ENCODE measurements at regions of chr6 and their contacts with region 1.

Region 1: GRCh38 chr6:80106418-80107235 is at the start of gene BCKDHB:
- DNase-seq: peak; percentile 94 to 99 (median 96)
- ATAC-seq: peak; percentile 97
- H3K4me3 ChIP-seq: peak within 1 kb of the TSS; percentile 80
- H3K4me3 Mint-ChIP-seq: peak within 1 kb of the TSS; percentile 93
- H3K27ac ChIP-seq: peak within 1 kb of the TSS; percentile 23 to 30
- H3K27ac Mint-ChIP-seq: peak within 1 kb of the TSS; percentile 80
- H3K4me1 ChIP-seq: peaks cover 9% of the 10 kb centered on the region
- H3K4me1 Mint-ChIP-seq: peaks cover 36% of the 10 kb centered on the region
- H3K27me3 ChIP-seq: no peaks in the 10 kb centered on the region
- H3K27me3 Mint-ChIP-seq: peaks cover 14% of the 10 kb centered on the region
- CTCF ChIP-seq: no peak
- total RNA-seq, gene BCKDHB: 7.8 to 8.1 TPM

Region 2: GRCh38 chr6:79233611-79234149 is 872.9 kb before region 1 on chr6:
- CTCF ChIA-PET with region 1: no interaction called
- POLR2A ChIA-PET with region 1: no interaction called
- intact Hi-C with region 1: loop called in 1 of 2 experiments (anchors 5 kb)
- DNase-seq: peak; percentile 19 to 78 (median 46)
- ATAC-seq: peak; percentile 28
- H3K4me3 ChIP-seq: peak overlapping the region; percentile 77
- H3K4me3 Mint-ChIP-seq: peak overlapping the region; percentile 99
- H3K27ac ChIP-seq: peak overlapping the region in 1 of 2 donors; percentile 14
- H3K27ac Mint-ChIP-seq: peak overlapping the region; percentile 86
- H3K4me1 ChIP-seq: peaks cover 4% of the 10 kb centered on the region
- H3K4me1 Mint-ChIP-seq: peaks cover 32% of the 10 kb centered on the region
- H3K27me3 ChIP-seq: no peaks in the 10 kb centered on the region
- H3K27me3 Mint-ChIP-seq: no peaks in the 10 kb centered on the region
- CTCF ChIP-seq: peak; percentile 19

Region 3: DNA sequence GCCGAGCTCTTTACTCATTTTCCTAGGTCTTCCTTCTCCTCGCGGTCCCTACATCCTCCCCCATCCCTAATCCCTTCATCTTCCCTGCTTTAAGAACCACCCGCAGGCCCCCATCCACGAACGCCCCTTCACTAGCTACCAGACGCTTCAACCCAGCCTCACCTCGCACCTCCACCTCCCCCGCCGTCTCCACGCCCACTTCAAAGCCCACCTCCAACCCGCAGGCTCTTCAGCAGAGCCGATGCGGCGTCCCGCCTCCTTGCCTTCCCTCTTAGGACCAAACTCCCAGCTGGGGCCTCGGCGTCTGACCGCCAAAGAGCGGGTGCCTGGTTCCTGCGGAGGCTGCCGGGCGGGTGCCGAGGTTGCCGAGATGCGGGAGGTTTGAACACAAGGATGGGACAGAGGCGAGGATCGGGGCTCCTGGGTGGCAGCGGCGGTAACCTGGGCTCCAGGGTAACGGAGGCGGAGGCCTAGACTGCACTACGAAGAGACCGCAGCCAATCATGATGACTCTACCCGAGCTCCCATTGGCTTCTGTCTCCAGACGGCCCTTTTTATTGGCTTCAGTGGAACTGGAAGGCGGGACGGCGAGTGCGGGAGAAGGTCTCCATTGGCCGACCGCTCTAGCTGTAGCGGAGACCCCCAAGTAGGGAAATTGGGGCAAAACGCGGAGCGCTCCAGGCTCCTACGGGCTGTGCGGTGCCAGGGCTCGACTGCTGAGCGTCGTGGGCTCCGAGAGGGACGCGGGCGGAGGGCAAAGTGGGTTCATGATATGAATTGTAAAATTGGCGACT is 569.5 kb before region 1 on chr6 and contains the start of gene LCA5:
- CTCF ChIA-PET with region 1: no interaction called
- POLR2A ChIA-PET with region 1: no interaction called
- intact Hi-C with region 1: loop called in 1 of 2 experiments (anchors 10 kb)
- DNase-seq: peak; percentile 60 to 91 (median 76)
- ATAC-seq: peak; percentile 96
- H3K4me3 ChIP-seq: peak within 1 kb of the TSS; percentile 74
- H3K4me3 Mint-ChIP-seq: no peak within 1 kb of the TSS
- H3K27ac ChIP-seq: no peak within 1 kb of the TSS
- H3K27ac Mint-ChIP-seq: no peak within 1 kb of the TSS
- H3K4me1 ChIP-seq: peaks cover 16% of the 10 kb centered on the region
- H3K4me1 Mint-ChIP-seq: no peaks in the 10 kb centered on the region
- H3K27me3 ChIP-seq: peaks cover 0 to 17% of the 10 kb centered on the region in 2 experiments
- H3K27me3 Mint-ChIP-seq: peaks cover 10% of the 10 kb centered on the region
- CTCF ChIP-seq: no peak
- total RNA-seq, gene LCA5: not detected

Region 4: GRCh38 chr6:79813854-79814709 is 292.5 kb before region 1 on chr6:
- CTCF ChIA-PET with region 1: no interaction called
- POLR2A ChIA-PET with region 1: no interaction called
- intact Hi-C with region 1: no loop called
- DNase-seq: peak; percentile 24 to 69 (median 46)
- ATAC-seq: peak; percentile 46
- H3K4me3 ChIP-seq: no peak overlapping the region
- H3K4me3 Mint-ChIP-seq: no peak overlapping the region
- H3K27ac ChIP-seq: no peak overlapping the region
- H3K27ac Mint-ChIP-seq: no peak overlapping the region
- H3K4me1 ChIP-seq: no peaks in the 10 kb centered on the region
- H3K4me1 Mint-ChIP-seq: no peaks in the 10 kb centered on the region
- H3K27me3 ChIP-seq: no peaks in the 10 kb centered on the region
- H3K27me3 Mint-ChIP-seq: peaks cover 15% of the 10 kb centered on the region
- CTCF ChIP-seq: peak; percentile 87

Region 5: DNA sequence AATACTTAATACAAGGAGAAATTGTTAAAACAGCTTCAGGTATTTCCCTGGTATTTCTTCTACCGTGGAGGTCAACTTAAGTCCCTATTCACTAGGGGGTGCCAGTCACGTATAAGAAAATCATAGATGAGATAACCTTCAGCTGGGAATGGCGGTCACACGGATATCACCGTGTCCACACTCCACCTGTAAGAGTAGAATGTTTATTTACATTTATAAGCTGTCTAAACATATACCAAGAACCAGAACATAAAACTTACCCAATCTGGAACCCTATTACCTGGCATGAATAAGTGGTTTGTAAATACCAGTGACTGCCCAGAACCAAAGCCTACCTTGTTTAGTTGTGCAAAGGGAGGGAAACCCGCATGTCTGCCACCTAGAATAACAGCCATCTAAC is 157.4 kb before region 1 on chr6:
- CTCF ChIA-PET with region 1: interaction called, 11 read pairs
- POLR2A ChIA-PET with region 1: interaction called, 9 read pairs
- intact Hi-C with region 1: no loop called
- DNase-seq: peak in 12 of 14 experiments; percentile 4 to 87 (median 32)
- ATAC-seq: peak; percentile 38
- H3K4me3 ChIP-seq: no peak overlapping the region
- H3K4me3 Mint-ChIP-seq: peak overlapping the region; percentile 68
- H3K27ac ChIP-seq: no peak overlapping the region
- H3K27ac Mint-ChIP-seq: no peak overlapping the region
- H3K4me1 ChIP-seq: peaks cover 25% of the 10 kb centered on the region
- H3K4me1 Mint-ChIP-seq: peaks cover 29% of the 10 kb centered on the region
- H3K27me3 ChIP-seq: peaks cover 7 to 31% of the 10 kb centered on the region in 2 experiments
- H3K27me3 Mint-ChIP-seq: peaks cover 23% of the 10 kb centered on the region
- CTCF ChIP-seq: peak; percentile 81

Measured in CD4-positive, alpha-beta T cell (primary cell).